Activated T-helper 2 cell treated with anti-CD3 and anti-CD28 coated beads, Interferon-gamma antibody, Interleukin-2, Interleukin-4, amounts not matched to agents 10 μg/mL and 5 μg/mL and 100 μg/mL, durations not matched to agents 14 hours and 24 hours and 36 hours (primary cell): ENCODE measurements at regions of chr12 and their contacts with region 1.

Region 1: DNA sequence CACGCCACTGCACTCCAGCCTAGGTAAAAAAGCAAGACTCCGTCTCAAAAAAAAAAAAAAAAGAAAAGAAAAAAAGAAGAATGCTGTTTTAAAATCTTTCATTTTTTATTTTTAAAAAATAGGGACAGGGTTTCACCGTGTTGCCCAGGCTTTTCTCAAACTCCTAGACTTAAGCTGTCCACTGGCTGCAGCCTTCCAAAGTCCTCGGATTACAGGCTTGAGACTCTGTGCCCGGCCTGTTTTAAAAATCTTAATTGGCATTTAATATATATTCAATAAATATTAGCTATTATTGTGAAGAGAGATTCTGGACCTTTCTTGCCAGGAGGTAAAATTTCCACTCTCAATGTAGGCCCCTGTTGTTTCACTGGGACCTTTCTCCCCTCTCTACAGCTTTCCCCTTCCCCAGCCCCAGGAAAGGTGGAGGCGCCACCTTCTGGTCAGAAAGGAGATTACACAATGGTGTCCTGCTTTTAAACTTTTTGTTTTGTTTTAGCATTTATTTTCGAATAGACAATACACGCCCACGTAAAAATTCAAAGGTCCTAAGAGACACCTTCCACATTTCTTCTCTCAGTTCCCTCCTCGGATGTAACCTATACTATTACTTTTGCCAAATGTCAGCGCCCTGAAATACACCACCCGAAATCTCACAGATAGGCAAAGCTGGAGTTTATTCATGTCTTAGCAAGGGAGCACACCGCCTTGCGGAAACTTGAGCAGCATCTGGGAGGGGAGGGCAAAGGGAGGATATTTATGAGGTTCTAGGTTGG is 23.8 kb upstream of the PHC1 start:
- DNase-seq: peak; percentile 32
- H3K4me3 Mint-ChIP-seq: peak overlapping the region; percentile 78
- H3K27ac Mint-ChIP-seq: no peak overlapping the region
- H3K4me1 Mint-ChIP-seq: peaks cover 11% of the 10 kb centered on the region
- H3K27me3 Mint-ChIP-seq: peaks cover 14% of the 10 kb centered on the region

Region 2: GRCh38 chr12:8544295-8544694 is 346.2 kb before region 1 on chr12:
- intact Hi-C with region 1: loop called (anchors 10 kb)
- DNase-seq: peak; percentile 43
- H3K4me3 Mint-ChIP-seq: no peak overlapping the region
- H3K27ac Mint-ChIP-seq: no peak overlapping the region
- H3K4me1 Mint-ChIP-seq: no peaks in the 10 kb centered on the region
- H3K27me3 Mint-ChIP-seq: peaks cover 31% of the 10 kb centered on the region

Region 3: GRCh38 chr12:8644345-8645248 is 245.9 kb before region 1 on chr12:
- intact Hi-C with region 1: loop called (anchors 2 kb)
- DNase-seq: peak; percentile 46
- H3K4me3 Mint-ChIP-seq: peak overlapping the region; percentile 31
- H3K27ac Mint-ChIP-seq: peak overlapping the region; percentile 34
- H3K4me1 Mint-ChIP-seq: peaks cover 35% of the 10 kb centered on the region
- H3K27me3 Mint-ChIP-seq: peaks cover 41% of the 10 kb centered on the region

Region 4: DNA sequence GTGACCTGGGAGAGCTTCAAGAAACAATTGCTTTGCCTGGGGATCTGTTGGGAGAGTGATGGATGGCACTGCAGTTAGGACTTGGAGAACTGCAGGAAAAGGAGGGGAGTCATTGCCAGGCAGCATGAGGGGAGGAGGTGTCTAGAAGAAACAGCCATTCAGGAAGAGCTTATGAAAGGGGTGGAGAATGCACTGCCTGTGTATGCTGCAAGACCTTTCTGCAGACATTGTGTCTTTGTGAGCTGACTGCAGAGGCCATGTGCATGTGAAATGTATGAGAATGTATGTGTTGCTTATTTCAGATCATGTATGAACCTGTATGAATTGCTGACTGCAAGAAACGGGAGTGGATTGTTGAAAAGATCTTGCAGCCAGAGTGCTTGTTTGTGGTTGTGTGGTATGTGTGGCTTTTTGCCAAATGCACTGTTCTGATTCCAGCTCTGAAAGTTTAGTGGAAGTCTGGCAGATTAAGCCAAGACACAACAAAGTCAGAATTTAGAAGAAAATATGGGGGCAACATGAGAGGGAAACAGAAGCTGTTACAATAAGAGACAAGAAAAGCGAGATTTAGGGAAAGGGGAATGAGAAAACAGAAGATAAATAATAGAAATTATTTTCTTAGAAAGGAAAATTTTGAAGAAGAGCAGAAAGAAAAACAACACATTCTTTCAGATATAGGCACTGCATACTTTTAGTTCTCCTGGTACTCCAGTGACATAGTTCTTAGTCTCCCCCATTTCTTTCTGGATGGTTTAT is 202.5 kb before region 1 on chr12:
- intact Hi-C with region 1: loop called (anchors 2 kb)
- DNase-seq: no peak
- H3K4me3 Mint-ChIP-seq: no peak overlapping the region
- H3K27ac Mint-ChIP-seq: no peak overlapping the region
- H3K4me1 Mint-ChIP-seq: no peaks in the 10 kb centered on the region
- H3K27me3 Mint-ChIP-seq: peaks cover 39% of the 10 kb centered on the region

Region 5: GRCh38 chr12:8870586-8870985 is 19.9 kb before region 1 on chr12:
- intact Hi-C with region 1: no loop called
- DNase-seq: no peak
- H3K4me3 Mint-ChIP-seq: no peak overlapping the region
- H3K27ac Mint-ChIP-seq: no peak overlapping the region
- H3K4me1 Mint-ChIP-seq: peaks cover 3% of the 10 kb centered on the region
- H3K27me3 Mint-ChIP-seq: peaks cover 8% of the 10 kb centered on the region

Region 6: GRCh38 chr12:9096563-9097176 is 206.2 kb after region 1 on chr12:
- intact Hi-C with region 1: no loop called
- DNase-seq: no peak
- H3K4me3 Mint-ChIP-seq: no peak overlapping the region
- H3K27ac Mint-ChIP-seq: no peak overlapping the region
- H3K4me1 Mint-ChIP-seq: no peaks in the 10 kb centered on the region
- H3K27me3 Mint-ChIP-seq: no peaks in the 10 kb centered on the region